GM12878 (cell line): ENCODE measurements at regions of chr3 and their contacts with region 1.

Region 1: DNA sequence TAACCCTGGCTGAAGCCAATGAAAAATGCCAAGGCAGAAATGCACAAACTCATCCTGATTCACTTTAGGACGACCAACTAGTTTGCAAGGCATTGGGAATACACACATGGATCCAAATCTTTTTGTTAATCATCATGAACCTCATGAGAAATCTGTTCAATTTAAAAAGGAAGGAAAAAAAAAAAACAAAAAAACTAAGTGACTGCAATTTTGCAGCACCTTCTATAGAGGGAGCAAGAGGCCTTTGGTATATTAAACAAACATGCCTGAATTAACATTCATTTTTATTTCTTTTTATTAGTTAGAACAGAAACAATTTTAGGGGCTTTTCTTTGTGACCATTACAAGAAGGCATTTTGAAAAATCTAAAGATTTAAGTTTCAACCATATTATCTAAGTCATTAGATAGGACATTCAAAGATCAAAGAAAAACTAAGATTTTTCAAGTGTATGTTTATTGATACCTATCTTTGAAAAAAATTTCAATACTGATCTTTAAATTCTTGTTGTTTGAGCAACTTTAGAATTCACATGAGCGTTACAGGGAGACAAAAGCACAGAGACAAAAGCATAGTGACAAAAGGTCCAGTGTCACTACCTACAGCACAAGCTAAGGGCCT is 182.4 kb downstream of the CBLB start:
- DNase-seq: no peak
- ATAC-seq: peak; percentile 46
- H3K4me3 ChIP-seq: no peak overlapping the region
- H3K27ac ChIP-seq: no peak overlapping the region
- H3K4me1 ChIP-seq: no peaks in the 10 kb centered on the region
- H3K27me3 ChIP-seq: no peaks in the 10 kb centered on the region
- CTCF ChIP-seq: peak; percentile 57 to 69 (median 65)
- EP300 ChIP-seq: no peak
- POLR2A ChIP-seq: no peak
- RAD21 ChIP-seq: peak; percentile 83

Region 2: DNA sequence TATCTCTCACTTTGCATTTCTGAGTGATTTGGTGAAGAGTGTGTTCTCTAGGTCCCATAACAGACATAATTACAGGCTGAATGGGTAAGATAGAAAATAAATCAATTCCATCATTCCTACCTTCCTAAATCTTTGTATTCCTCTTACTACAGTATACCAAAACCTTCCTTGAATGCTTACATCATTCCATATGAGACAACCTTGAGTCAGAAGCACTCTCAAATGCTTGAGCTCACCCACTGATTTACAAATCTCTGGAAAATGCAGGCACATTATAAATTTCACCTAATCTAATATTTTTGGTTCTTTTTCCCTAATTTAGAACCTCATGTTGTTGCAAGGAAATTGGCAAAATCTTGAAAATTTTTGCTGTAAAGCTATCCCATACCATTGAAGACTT is 56.7 kb before region 1 on chr3:
- CTCF ChIA-PET with region 1: no interaction called
- POLR2A ChIA-PET with region 1: no interaction called
- RAD21 ChIA-PET with region 1: no interaction called
- SMC1A ChIA-PET with region 1: no interaction called
- in situ Hi-C with region 1: no loop called
- intact Hi-C with region 1: no loop called
- DNase-seq: no peak
- ATAC-seq: no peak
- H3K4me3 ChIP-seq: no peak overlapping the region
- H3K27ac ChIP-seq: no peak overlapping the region
- H3K4me1 ChIP-seq: no peaks in the 10 kb centered on the region
- H3K27me3 ChIP-seq: no peaks in the 10 kb centered on the region
- CTCF ChIP-seq: no peak
- EP300 ChIP-seq: no peak
- POLR2A ChIP-seq: no peak
- RAD21 ChIP-seq: no peak

Region 3: DNA sequence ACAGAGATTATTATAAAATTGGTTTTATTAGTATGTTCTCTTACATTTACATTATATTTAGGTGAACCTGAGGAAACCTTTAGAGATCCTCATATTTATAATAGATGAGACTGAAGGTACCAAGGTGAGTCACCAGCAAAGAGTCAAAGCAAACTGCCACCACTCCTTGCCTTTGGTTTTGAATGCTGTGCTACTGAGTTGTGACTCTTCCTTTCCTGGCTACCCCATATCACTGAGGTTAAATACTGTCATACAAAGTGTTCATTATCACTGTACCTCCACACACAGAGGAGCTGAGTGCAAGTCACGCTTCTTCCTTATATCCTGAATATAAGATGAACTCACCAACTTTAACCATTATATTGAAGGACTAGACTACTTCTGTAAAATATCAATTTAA is 14.2 kb after region 1 on chr3:
- CTCF ChIA-PET with region 1: interaction called, 7 read pairs
- POLR2A ChIA-PET with region 1: no interaction called
- RAD21 ChIA-PET with region 1: interaction called, 3 read pairs
- SMC1A ChIA-PET with region 1: interaction called, 12 read pairs
- in situ Hi-C with region 1: no loop called
- intact Hi-C with region 1: no loop called
- DNase-seq: no peak
- ATAC-seq: no peak
- H3K4me3 ChIP-seq: no peak overlapping the region
- H3K27ac ChIP-seq: no peak overlapping the region
- H3K4me1 ChIP-seq: no peaks in the 10 kb centered on the region
- H3K27me3 ChIP-seq: no peaks in the 10 kb centered on the region
- CTCF ChIP-seq: no peak
- EP300 ChIP-seq: no peak
- POLR2A ChIP-seq: no peak
- RAD21 ChIP-seq: no peak

Region 4: DNA sequence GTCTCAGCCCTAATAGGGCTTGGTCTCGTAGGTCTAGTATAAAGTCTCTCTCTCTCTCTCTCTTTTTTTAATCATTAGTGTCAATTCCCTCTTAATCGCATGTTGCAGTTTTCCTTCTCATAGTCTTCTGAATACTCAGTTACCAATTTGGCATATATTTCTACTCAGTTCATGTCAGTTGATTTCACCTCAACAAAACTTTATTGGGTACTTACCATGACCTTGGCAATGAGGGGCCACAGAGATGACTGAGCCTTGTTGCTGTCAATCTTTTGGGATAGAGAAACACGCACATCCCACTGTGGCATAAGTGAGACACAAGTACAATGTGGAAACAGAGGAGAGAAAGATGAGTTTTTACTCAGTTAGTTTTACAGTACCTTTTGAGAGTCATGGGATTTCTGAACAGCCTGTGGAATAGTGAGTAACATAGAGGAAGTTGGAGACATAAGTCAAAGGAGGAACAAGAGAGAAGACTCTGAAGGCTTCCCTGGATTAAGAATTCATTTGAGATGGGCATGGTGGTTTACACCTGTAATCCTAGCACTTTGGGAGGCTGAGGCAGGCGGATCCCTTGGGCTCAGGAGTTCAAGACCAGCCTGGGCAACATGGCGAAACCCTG is 332.7 kb after region 1 on chr3:
- CTCF ChIA-PET with region 1: no interaction called
- POLR2A ChIA-PET with region 1: no interaction called
- RAD21 ChIA-PET with region 1: no interaction called
- SMC1A ChIA-PET with region 1: no interaction called
- in situ Hi-C with region 1: no loop called
- intact Hi-C with region 1: no loop called
- DNase-seq: no peak
- ATAC-seq: no peak
- H3K4me3 ChIP-seq: no peak overlapping the region
- H3K27ac ChIP-seq: no peak overlapping the region
- H3K4me1 ChIP-seq: no peaks in the 10 kb centered on the region
- H3K27me3 ChIP-seq: no peaks in the 10 kb centered on the region
- CTCF ChIP-seq: no peak
- EP300 ChIP-seq: no peak
- POLR2A ChIP-seq: no peak
- RAD21 ChIP-seq: no peak

Region 5: GRCh38 chr3:106206146-106206545 is 519.8 kb after region 1 on chr3:
- CTCF ChIA-PET with region 1: no interaction called
- POLR2A ChIA-PET with region 1: no interaction called
- RAD21 ChIA-PET with region 1: interaction called, 4 read pairs
- SMC1A ChIA-PET with region 1: interaction called, 12 read pairs
- in situ Hi-C with region 1: no loop called
- intact Hi-C with region 1: loop called (anchors 5 kb)
- DNase-seq: peak; percentile 28
- ATAC-seq: peak; percentile 84
- H3K4me3 ChIP-seq: no peak overlapping the region
- H3K27ac ChIP-seq: peak overlapping the region; percentile 43
- H3K4me1 ChIP-seq: peaks cover 4% of the 10 kb centered on the region
- H3K27me3 ChIP-seq: no peaks in the 10 kb centered on the region
- CTCF ChIP-seq: no peak
- EP300 ChIP-seq: no peak
- POLR2A ChIP-seq: no peak
- RAD21 ChIP-seq: no peak

Region 6: GRCh38 chr3:106255870-106256248 is 569.5 kb after region 1 on chr3:
- CTCF ChIA-PET with region 1: interaction called, 4 read pairs
- POLR2A ChIA-PET with region 1: no interaction called
- RAD21 ChIA-PET with region 1: interaction called, 7 read pairs
- SMC1A ChIA-PET with region 1: interaction called, 6 read pairs
- in situ Hi-C with region 1: no loop called
- intact Hi-C with region 1: loop called (anchors 2 kb)
- DNase-seq: peak; percentile 93
- ATAC-seq: peak; percentile 88
- H3K4me3 ChIP-seq: peak overlapping the region; percentile 83
- H3K27ac ChIP-seq: peak overlapping the region; percentile 99
- H3K4me1 ChIP-seq: no peaks in the 10 kb centered on the region
- H3K27me3 ChIP-seq: no peaks in the 10 kb centered on the region
- CTCF ChIP-seq: no peak
- EP300 ChIP-seq: peak in 1 of 2 experiments; percentile 82; a peak in 2 of 4 replicates
- POLR2A ChIP-seq: peak; percentile 71
- RAD21 ChIP-seq: peak; percentile 7; the same call in 1 of the 2 replicates

Region 7: GRCh38 chr3:106428565-106428994 is 742.2 kb after region 1 on chr3:
- CTCF ChIA-PET with region 1: no interaction called
- POLR2A ChIA-PET with region 1: no interaction called
- RAD21 ChIA-PET with region 1: no interaction called
- SMC1A ChIA-PET with region 1: no interaction called
- in situ Hi-C with region 1: no loop called
- intact Hi-C with region 1: loop called (anchors 10 kb)
- DNase-seq: no peak
- ATAC-seq: peak; percentile 44; the same call in 2 of the 3 replicates
- H3K4me3 ChIP-seq: no peak overlapping the region
- H3K27ac ChIP-seq: no peak overlapping the region
- H3K4me1 ChIP-seq: peaks cover 13% of the 10 kb centered on the region
- H3K27me3 ChIP-seq: no peaks in the 10 kb centered on the region
- CTCF ChIP-seq: no peak
- EP300 ChIP-seq: no peak
- POLR2A ChIP-seq: no peak
- RAD21 ChIP-seq: no peak

Region 8: DNA sequence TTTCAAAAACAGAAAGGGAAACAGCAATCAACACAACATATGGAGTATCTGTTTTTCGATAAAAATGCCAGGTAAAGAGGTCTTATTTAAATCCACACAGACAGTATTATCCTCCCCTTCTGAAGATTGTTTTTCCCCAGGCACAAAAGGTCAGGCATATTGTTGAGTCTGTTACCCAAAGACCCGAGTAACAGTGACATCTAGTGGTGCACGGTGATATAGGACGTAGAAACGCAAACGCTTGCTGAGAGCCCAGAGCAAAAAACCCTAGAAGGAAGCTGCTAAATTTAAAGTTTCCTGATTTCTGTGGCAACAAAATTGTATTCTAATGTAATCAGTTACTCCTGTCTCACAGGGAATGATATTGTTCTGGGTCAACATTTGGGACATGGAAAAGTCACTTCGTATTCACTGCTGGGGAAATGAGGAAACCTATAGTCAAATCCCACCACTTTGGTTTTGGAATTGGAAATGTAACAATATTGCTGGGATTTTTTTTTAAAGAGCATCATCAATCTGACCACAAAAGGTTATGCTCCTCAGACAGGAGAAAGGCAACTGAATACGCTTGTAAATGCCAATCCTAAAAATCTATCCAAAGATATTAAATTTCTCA is 1378.2 kb after region 1 on chr3:
- CTCF ChIA-PET with region 1: interaction called, 4 read pairs
- POLR2A ChIA-PET with region 1: no interaction called
- RAD21 ChIA-PET with region 1: no interaction called
- SMC1A ChIA-PET with region 1: interaction called, 3 read pairs
- in situ Hi-C with region 1: no loop called
- intact Hi-C with region 1: loop called (anchors 10 kb)
- DNase-seq: peak; percentile 25
- ATAC-seq: peak; percentile 95
- H3K4me3 ChIP-seq: no peak overlapping the region
- H3K27ac ChIP-seq: no peak overlapping the region
- H3K4me1 ChIP-seq: no peaks in the 10 kb centered on the region
- H3K27me3 ChIP-seq: no peaks in the 10 kb centered on the region
- CTCF ChIP-seq: peak; percentile 81 to 83 (median 82)
- EP300 ChIP-seq: no peak
- POLR2A ChIP-seq: no peak
- RAD21 ChIP-seq: peak; percentile 98